ENCODE measurements at regions of chr13 and their contacts with region 1.

Region 1: DNA sequence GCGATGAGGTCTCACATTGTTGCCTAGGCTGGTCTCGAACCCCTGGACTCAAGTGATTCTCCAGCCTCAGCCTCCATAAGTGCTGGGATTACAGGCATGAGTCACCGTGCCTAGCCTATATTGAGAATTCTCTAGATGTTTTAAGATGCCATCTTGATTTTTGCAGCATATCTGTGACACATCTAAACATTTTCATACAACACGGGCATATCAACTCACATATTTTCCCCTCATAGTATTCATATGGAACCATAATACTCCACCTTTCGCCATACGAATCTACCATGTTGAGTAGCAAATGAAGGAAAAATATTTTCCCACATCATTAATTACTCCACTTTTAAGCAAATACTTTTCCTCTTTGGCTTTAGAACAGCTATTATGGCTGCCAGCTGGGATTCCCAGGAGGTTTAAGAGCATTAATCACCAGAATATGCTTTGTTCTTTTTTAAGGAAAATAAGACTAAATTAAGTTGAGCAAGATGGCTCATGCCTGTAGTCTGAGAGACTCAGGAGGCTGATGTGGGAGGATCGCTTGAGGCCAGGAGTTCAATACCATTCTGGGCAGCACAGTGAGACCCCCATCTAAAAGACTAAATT is 56.9 kb upstream of the GTF2F2 start:
- DNase-seq: no peak
- H3K4me3 ChIP-seq: no peak overlapping the region
- H3K27ac ChIP-seq: no peak overlapping the region
- H3K4me1 ChIP-seq: no peaks in the 10 kb centered on the region
- CTCF ChIP-seq: no peak

Region 2: DNA sequence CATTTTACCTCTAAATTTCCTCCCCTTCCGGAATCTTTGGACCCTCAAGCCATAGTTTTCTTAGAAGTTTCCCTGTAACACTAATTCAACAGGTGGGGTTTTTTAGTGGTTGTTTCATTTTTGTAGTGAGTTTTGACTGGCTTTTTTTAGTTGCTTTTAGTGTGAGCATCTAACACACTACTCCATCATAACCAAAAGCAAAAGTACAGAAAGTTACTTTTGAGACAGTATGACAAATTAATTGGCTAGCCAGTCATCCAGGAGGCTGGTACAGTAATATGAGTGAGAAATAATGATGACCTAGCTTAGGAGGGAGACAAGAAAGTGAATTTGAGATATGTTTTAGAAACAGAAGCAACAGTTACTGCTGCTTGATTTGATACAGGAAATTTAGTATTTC is 1968.5 kb before region 1 on chr13:
- CTCF ChIA-PET with region 1: no interaction called
- POLR2A ChIA-PET with region 1: no interaction called
- intact Hi-C with region 1: loop called (anchors 10 kb)
- DNase-seq: no peak
- H3K4me3 ChIP-seq: no peak overlapping the region
- H3K27ac ChIP-seq: no peak overlapping the region
- H3K4me1 ChIP-seq: no peaks in the 10 kb centered on the region
- CTCF ChIP-seq: no peak

Region 3: DNA sequence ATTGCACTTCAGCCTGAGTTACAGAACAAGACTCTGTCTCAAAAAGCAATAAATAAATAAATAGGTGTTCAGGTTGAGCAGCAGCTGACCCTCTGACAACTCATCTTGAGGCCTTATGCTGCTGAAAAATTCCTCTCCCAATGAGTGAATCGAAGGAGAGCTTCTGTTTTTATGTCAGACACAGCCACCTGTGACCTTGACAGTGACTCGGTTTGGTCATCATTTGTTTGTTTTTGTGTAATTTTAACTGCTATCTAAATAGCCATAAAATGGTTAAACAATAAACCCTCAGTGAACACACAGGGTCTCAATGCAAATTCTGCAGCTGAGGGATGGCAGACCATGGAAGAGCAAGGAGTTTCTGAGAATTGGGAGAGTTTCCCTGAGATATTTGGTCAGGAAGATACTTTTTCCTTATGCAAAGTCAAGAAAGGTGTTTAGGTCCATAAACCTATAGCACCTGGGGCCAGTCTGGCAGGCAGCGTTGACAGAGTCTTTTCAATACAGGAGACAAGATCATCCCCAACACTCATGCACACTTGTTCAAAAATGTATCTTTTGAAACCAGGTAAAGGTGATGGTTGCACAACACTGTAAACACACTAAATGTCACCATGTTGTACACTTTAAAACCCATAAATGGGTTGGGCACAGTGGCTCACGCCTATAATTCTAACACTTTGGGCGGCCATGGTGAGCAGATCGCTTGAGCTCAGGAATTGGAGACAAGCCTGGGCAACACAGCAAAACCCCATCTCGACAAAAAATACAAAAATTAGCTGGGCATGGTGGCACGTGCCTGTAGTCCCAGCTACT is 371.4 kb after region 1 on chr13:
- CTCF ChIA-PET with region 1: no interaction called
- POLR2A ChIA-PET with region 1: no interaction called
- intact Hi-C with region 1: no loop called
- DNase-seq: no peak
- H3K4me3 ChIP-seq: no peak overlapping the region
- H3K27ac ChIP-seq: no peak overlapping the region
- H3K4me1 ChIP-seq: no peaks in the 10 kb centered on the region
- CTCF ChIP-seq: no peak

Measured in OCI-LY7 (cell line).